Motor neuron (in vitro differentiated cells): ENCODE measurements at regions of chr10 and their contacts with region 1.

Region 1: DNA sequence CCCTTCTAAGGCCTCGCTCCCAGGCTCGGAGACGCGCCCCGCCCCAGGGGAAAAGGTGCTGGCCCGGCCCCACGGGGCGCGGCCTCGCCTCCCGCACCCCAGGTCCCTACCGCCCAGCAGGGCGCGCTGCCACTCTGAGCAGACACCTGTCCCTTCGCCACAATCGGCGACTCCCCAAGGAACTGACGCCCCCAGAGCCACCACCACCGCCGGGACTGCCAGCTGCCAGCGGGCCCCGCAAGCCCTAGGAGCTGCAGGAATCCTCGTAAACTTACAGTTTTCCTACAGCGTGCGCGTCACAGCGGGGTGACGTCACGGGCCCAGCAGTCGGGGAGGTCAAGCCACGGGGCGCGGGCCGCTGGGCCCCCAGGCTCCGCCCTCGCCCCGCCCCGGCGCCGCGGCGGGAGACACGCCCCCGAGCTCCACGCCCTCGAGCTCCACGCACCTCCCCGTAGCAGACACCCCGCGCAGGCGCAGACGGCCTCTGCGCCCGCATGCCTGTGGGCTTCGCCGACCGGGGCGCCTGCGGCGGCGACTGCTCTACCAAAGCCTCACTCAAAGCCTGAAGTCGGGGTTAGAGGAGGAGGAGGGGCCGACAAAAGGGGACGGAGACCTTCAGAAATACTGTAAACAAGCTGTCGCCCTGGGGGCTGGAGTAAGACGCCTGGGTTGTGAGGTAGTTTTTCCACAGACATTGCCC is at the start of gene ZNF438:
- ATAC-seq: peak; percentile 70 to 86 (median 82)
- H3K4me3 ChIP-seq: peak within 1 kb of the TSS; percentile 48 to 67 (median 56)
- H3K27ac ChIP-seq: peak within 1 kb of the TSS; percentile 94 to 99
- H3K4me1 ChIP-seq: peaks cover 17 to 23% of the 10 kb centered on the region in 2 donors
- total RNA-seq, gene ZNF438: 2.1 to 5.3 (median 3.8) TPM

Region 2: GRCh38 chr10:31490858-31491504 is 459.3 kb after region 1 on chr10:
- in situ Hi-C with region 1: loop called in 1 of 9 experiments (anchors 25 kb)
- ATAC-seq: peak in 3 of 8 experiments; percentile 59 to 77 (median 71)
- H3K4me3 ChIP-seq: no peak overlapping the region
- H3K27ac ChIP-seq: no peak overlapping the region
- H3K4me1 ChIP-seq: no peaks in the 10 kb centered on the region

Region 3: GRCh38 chr10:31612082-31612481 is 580.4 kb after region 1 on chr10:
- in situ Hi-C with region 1: no loop called
- ATAC-seq: no peak
- H3K4me3 ChIP-seq: no peak overlapping the region
- H3K27ac ChIP-seq: no peak overlapping the region
- H3K4me1 ChIP-seq: no peaks in the 10 kb centered on the region